ENCODE measurements at regions of chr6 and their contacts with region 1.

Region 1: DNA sequence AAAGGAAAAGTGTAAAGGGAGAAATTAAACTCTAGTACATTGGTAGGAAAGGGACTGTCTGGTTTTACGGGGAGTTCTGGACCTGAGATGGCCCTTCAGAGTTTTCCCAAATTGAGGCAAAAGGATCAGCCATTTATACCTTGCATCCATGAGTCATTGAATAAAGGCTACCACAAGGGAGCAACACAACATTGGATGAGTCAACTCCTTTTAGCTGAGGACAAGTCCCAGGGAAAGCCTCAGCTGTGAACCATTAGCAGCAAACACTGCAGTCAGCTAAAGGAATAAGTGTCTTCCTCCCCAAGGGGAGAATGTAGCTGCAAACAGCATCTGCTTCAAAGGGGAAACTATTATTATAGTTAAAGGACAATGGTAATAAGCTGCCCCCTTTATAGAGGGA is 468.7 kb upstream of the ID4 start:
- DNase-seq: no peak
- ATAC-seq: no peak
- H3K4me3 ChIP-seq: no peak overlapping the region
- H3K27ac ChIP-seq: no peak overlapping the region
- H3K4me1 ChIP-seq: no peaks in the 10 kb centered on the region
- H3K27me3 ChIP-seq: no peaks in the 10 kb centered on the region
- CTCF ChIP-seq: no peak

Region 2: GRCh38 chr6:19086480-19086879 is 282.0 kb before region 1 on chr6:
- intact Hi-C with region 1: loop called in 1 of 10 experiments (anchors 5 kb)
- DNase-seq: no peak
- ATAC-seq: no peak
- H3K4me3 ChIP-seq: no peak overlapping the region
- H3K27ac ChIP-seq: no peak overlapping the region
- H3K4me1 ChIP-seq: peaks cover 0 to 4% (median 0%) of the 10 kb centered on the region in 9 donors
- H3K27me3 ChIP-seq: no peaks in the 10 kb centered on the region
- CTCF ChIP-seq: no peak